ENCODE measurements at regions of chr5 and their contacts with region 1.

Region 1: DNA sequence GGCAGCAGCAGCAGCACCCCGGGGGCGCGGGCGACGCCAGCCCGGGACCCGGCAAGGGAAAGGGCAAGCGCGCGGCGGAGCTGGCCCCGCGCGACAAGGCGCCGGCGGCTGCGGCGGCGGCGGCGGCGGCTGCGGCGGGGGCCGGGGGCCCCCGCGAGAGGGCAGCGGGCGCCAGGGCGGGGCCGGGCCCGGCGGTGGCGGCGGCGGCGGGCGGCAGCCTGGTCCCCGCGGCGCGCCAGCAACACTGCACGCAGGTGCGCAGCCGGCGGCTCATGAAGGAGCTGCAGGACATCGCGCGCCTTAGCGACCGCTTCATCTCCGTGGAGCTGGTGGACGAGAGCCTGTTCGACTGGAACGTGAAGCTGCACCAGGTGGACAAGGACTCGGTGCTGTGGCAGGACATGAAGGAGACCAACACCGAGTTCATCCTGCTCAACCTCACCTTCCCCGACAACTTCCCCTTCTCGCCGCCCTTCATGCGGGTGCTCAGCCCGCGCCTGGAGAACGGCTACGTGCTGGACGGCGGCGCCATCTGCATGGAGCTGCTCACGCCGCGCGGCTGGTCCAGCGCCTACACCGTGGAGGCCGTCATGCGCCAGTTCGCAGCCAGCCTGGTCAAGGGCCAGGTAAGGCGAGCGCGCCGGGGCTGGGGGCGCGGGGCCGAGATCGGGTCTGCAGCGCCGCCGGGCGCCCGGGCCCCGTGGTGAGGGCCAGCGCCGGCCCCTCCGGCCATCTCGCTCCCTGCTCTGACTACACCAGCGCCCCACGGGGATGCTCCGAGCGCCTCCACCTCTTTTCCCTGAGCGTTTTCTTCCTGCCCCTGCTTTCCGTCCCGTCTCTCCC is at the start of gene UBE2QL1:
- DNase-seq: peak in 1 of 2 donors; percentile 31
- ATAC-seq: peak; percentile 31 to 70 (median 54)
- H3K4me3 ChIP-seq: peak within 1 kb of the TSS; percentile 51 to 74 (median 68)
- H3K27ac ChIP-seq: peak within 1 kb of the TSS in 8 of 10 donors; percentile 42 to 93 (median 56)
- H3K4me1 ChIP-seq: peaks cover 0 to 22% (median 14%) of the 10 kb centered on the region in 9 donors
- H3K27me3 ChIP-seq: peaks cover 0 to 42% (median 24%) of the 10 kb centered on the region in 7 donors
- CTCF ChIP-seq: no peak
- total RNA-seq, gene UBE2QL1: 13.0 to 26.3 (median 18.6) TPM

Region 2: GRCh38 chr5:6291961-6292360 is 156.9 kb before region 1 on chr5:
- intact Hi-C with region 1: no loop called
- DNase-seq: no peak
- ATAC-seq: peak in 2 of 8 donors; percentile 29 to 67
- H3K4me3 ChIP-seq: no peak overlapping the region
- H3K27ac ChIP-seq: no peak overlapping the region
- H3K4me1 ChIP-seq: no peaks in the 10 kb centered on the region
- H3K27me3 ChIP-seq: no peaks in the 10 kb centered on the region
- CTCF ChIP-seq: peak in 7 of 9 donors; percentile 30 to 57 (median 44)

Region 3: DNA sequence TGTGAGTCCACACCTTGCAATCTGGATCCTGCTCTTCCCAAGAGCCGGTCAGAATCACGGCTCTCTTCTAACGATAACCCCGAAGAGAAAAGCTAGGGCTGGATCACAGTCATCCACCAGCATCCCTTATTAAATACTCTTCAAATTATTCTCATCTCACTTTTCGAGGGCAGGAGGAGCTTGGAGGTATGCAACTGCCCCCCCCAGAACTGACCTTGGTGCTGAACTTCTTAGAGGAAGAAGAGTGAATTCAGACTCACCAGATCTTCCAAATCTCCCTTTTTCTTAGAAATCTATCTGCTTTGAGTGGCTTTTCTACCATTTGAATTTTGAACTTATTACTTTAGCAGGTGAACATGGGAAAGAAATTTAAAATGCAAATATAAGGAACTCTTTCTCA is 146.2 kb before region 1 on chr5:
- intact Hi-C with region 1: loop called in 1 of 10 experiments (anchors 10 kb)
- DNase-seq: no peak
- ATAC-seq: no peak
- H3K4me3 ChIP-seq: no peak overlapping the region
- H3K27ac ChIP-seq: no peak overlapping the region
- H3K4me1 ChIP-seq: no peaks in the 10 kb centered on the region
- H3K27me3 ChIP-seq: no peaks in the 10 kb centered on the region
- CTCF ChIP-seq: no peak

Region 4: GRCh38 chr5:6475626-6476312 is 26.9 kb after region 1 on chr5:
- intact Hi-C with region 1: no loop called
- DNase-seq: no peak
- ATAC-seq: peak in 1 of 8 donors; percentile 6
- H3K4me3 ChIP-seq: no peak overlapping the region
- H3K27ac ChIP-seq: no peak overlapping the region
- H3K4me1 ChIP-seq: peaks cover 0 to 47% (median 11%) of the 10 kb centered on the region in 9 donors
- H3K27me3 ChIP-seq: no peaks in the 10 kb centered on the region
- CTCF ChIP-seq: no peak

Measured in heart right ventricle (tissue), 16 donors.